GM12878 (cell line): ENCODE measurements at regions of chr4 and their contacts with region 1.

Region 1: DNA sequence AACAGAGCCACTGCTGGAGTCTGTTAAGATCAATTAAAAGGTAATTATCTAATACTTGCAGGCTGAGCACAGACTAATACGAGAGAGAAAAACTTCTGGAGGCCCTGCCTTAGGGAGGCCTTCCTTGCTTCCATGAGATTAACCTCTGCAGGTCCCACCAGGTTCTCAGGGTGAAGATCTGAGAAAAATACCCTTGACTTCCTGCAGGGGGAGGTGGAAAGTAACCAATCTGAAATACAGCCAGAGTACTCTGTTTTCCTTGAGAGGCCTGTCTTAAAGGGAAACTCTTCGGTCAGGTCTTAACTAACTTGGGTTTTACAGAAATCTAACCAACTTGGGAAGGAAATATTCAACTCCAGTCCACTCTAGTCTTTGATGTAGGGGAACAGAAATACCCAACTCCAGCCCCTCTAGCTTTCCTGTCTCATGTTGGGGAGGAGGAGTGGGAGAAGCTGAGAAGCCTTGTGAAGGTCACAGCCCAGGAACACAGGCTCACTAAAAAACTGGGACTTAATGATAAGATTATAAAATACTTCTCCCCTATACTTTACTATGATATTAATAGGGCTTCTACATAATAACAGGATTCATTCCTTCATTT is 77.1 kb downstream of the TBCK start:
- DNase-seq: no peak
- ATAC-seq: peak; percentile 96
- H3K4me3 ChIP-seq: no peak overlapping the region
- H3K27ac ChIP-seq: no peak overlapping the region
- H3K4me1 ChIP-seq: no peaks in the 10 kb centered on the region
- H3K27me3 ChIP-seq: no peaks in the 10 kb centered on the region
- CTCF ChIP-seq: peak; percentile 59 to 75 (median 65)
- EP300 ChIP-seq: no peak
- POLR2A ChIP-seq: no peak
- RAD21 ChIP-seq: peak; percentile 46

Region 2: GRCh38 chr4:106473515-106473914 is 234.6 kb after region 1 on chr4:
- CTCF ChIA-PET with region 1: no interaction called
- POLR2A ChIA-PET with region 1: no interaction called
- RAD21 ChIA-PET with region 1: no interaction called
- SMC1A ChIA-PET with region 1: no interaction called
- in situ Hi-C with region 1: no loop called
- intact Hi-C with region 1: no loop called
- DNase-seq: no peak
- ATAC-seq: peak; percentile 40; the same call in 2 of the 3 replicates
- H3K4me3 ChIP-seq: no peak overlapping the region
- H3K27ac ChIP-seq: no peak overlapping the region
- H3K4me1 ChIP-seq: no peaks in the 10 kb centered on the region
- H3K27me3 ChIP-seq: no peaks in the 10 kb centered on the region
- CTCF ChIP-seq: no peak
- EP300 ChIP-seq: no peak
- POLR2A ChIP-seq: no peak
- RAD21 ChIP-seq: no peak

Region 3: DNA sequence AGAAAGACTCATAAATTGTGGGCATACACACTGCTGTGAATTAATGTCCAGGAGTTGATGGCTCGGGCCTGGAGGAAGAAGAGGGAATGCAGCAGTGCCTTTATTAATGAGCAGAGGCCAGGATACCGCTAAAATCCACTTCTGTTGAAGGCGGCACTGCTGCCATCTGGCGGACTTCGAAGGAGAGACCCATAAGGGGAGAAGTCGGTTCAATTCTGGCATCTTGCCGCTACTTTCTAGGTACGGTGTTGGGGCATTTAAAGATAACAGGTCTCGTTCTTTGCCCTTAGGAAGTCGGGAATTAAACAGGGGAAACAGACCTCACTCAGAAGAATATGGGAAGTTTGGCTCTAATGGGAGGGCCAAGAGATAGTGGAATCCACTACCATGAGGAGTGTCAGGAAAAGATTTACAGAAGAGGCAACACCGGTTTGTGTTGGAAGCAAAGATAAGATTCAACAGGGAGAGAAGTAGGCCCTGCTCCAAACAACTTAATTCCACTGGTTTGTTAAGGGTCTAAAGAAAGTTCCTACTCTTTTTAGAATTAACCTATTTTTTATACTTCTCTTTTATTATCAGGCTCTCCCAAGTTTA is 263.3 kb after region 1 on chr4:
- CTCF ChIA-PET with region 1: interaction called, 10 read pairs
- POLR2A ChIA-PET with region 1: no interaction called
- RAD21 ChIA-PET with region 1: no interaction called
- SMC1A ChIA-PET with region 1: no interaction called
- in situ Hi-C with region 1: no loop called
- intact Hi-C with region 1: loop called (anchors 2 kb)
- DNase-seq: no peak
- ATAC-seq: peak; percentile 93
- H3K4me3 ChIP-seq: no peak overlapping the region
- H3K27ac ChIP-seq: no peak overlapping the region
- H3K4me1 ChIP-seq: no peaks in the 10 kb centered on the region
- H3K27me3 ChIP-seq: no peaks in the 10 kb centered on the region
- CTCF ChIP-seq: peak; percentile 60 to 76 (median 69); a peak in 5 of 6 replicates
- EP300 ChIP-seq: no peak
- POLR2A ChIP-seq: no peak
- RAD21 ChIP-seq: peak; percentile 77